ENCODE measurements at regions of chr6 and their contacts with region 1.

Region 1: GRCh38 chr6:7312616-7313504 is at the start of gene SSR1:
- DNase-seq: peak; percentile 98
- H3K4me3 ChIP-seq: peak within 1 kb of the TSS; percentile 95 to 99 (median 98)
- H3K27ac ChIP-seq: peak within 1 kb of the TSS; percentile 88
- H3K4me1 ChIP-seq: peaks cover 16% of the 10 kb centered on the region
- H3K27me3 ChIP-seq: peaks cover 0 to 2% of the 10 kb centered on the region in 2 experiments
- CTCF ChIP-seq: no peak
- POLR2A ChIP-seq: peak; percentile 89
- total RNA-seq, gene SSR1: 149 and 187 TPM in 2 replicates

Region 2: DNA sequence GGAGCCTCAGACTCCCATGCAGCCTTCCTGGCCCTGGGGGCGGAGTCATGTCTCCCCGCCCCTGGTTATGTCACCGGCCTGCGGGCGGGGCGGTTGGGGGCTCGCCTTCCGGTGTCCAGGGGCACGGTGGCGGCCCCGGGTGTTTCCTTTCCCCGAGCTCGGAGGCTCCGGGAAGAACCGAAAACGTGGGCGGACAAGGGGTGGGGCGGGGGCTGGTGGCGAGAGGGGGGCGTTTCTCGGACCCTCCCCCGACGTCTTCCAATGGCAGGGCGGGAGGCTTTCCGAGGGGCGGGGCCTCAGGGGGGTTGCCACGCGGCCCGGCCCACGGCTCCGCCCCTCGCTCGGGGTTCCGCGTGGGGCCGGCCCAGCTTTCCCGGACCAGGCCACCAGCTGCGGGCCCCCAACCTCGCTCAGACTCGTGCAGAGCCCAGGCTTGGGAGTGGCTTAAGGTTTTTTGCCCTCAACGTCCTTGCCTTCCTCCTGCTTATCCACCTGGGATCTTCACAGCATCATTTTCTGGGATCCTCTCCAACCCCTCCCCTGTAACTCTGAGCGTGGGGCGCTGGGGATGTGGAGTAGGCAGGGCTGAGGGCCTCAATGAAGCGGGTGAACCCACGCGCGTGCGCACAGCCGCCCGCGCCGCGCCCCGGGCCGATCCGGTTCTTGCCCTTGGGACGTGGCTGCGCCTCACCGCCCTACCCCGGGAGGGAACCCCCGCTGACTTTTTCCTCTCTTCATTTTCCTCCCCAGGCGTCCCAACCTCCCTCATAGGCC is 1304.0 kb before region 1 on chr6:
- CTCF ChIA-PET with region 1: no interaction called
- POLR2A ChIA-PET with region 1: no interaction called
- dilution Hi-C with region 1: no loop called
- intact Hi-C with region 1: loop called (anchors 5 kb)
- DNase-seq: peak; percentile 86
- H3K4me3 ChIP-seq: peak overlapping the region; percentile 21 to 86 (median 43)
- H3K27ac ChIP-seq: no peak overlapping the region
- H3K4me1 ChIP-seq: peaks cover 21% of the 10 kb centered on the region
- H3K27me3 ChIP-seq: peaks cover 34 to 57% of the 10 kb centered on the region in 2 experiments
- CTCF ChIP-seq: no peak
- POLR2A ChIP-seq: no peak

Region 3: GRCh38 chr6:7073082-7073820 is 239.6 kb before region 1 on chr6:
- CTCF ChIA-PET with region 1: no interaction called
- POLR2A ChIA-PET with region 1: no interaction called
- dilution Hi-C with region 1: no loop called
- intact Hi-C with region 1: no loop called
- DNase-seq: no peak
- H3K4me3 ChIP-seq: no peak overlapping the region
- H3K27ac ChIP-seq: no peak overlapping the region
- H3K4me1 ChIP-seq: no peaks in the 10 kb centered on the region
- H3K27me3 ChIP-seq: no peaks in the 10 kb centered on the region
- CTCF ChIP-seq: no peak
- POLR2A ChIP-seq: no peak

Region 4: GRCh38 chr6:7589949-7590917 is 277.4 kb after region 1 on chr6 and contains the start of gene SNRNP48:
- CTCF ChIA-PET with region 1: no interaction called
- POLR2A ChIA-PET with region 1: no interaction called
- dilution Hi-C with region 1: no loop called
- intact Hi-C with region 1: loop called (anchors 5 kb)
- DNase-seq: peak; percentile 96
- H3K4me3 ChIP-seq: peak within 1 kb of the TSS; percentile 59 to 89 (median 87)
- H3K27ac ChIP-seq: peak within 1 kb of the TSS; percentile 3
- H3K4me1 ChIP-seq: peaks cover 11% of the 10 kb centered on the region
- H3K27me3 ChIP-seq: peaks cover 0 to 6% of the 10 kb centered on the region in 2 experiments
- CTCF ChIP-seq: no peak
- POLR2A ChIP-seq: peak; percentile 70
- total RNA-seq, gene SNRNP48: 12.8 and 13.2 TPM in 2 replicates

Measured in endothelial cell of umbilical vein (primary cell).